ENCODE measurements at regions of chrX and their contacts with region 1.

Region 1: DNA sequence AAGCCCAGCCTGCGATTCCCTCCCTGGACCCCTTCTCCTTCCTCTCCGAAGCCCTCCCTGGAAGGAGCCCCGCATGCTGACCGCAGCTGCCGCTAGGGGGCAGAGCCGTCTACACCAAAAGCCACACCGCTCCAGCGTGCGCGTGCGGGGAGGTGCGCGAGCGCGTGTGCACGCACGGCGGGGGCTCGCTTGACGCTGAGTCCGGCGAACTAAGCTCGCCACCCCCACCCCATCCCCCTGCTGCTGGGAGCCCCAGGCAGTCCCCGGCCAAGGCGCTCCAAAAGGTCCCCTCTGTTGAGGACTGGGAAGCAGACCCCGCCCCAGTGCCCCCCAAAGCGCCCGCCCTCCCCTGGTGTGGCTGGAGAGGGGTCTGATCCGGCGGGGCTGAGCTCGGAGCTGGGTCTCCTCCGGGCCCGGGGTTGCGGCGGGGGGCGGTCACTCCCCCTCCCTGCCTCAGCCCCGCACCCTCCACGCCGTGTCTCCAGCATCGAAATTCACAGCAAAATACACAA is 11.0 kb upstream of the CCNQ start:
- DNase-seq: peak; percentile 52
- ATAC-seq: peak; percentile 84
- H3K4me3 ChIP-seq: peak overlapping the region; percentile 26 to 58 (median 36); a peak in 4 of 6 replicates
- H3K27ac ChIP-seq: peak overlapping the region; percentile 72
- H3K4me1 ChIP-seq: peaks cover 18% of the 10 kb centered on the region
- H3K27me3 ChIP-seq: no peaks in the 10 kb centered on the region
- CTCF ChIP-seq: peak; percentile 94
- EP300 ChIP-seq: no peak
- POLR2A ChIP-seq: no peak
- RAD21 ChIP-seq: peak; percentile 88

Region 2: GRCh38 chrX:153627675-153628111 is 17.7 kb after region 1 on chrX:
- CTCF ChIA-PET with region 1: no interaction called
- POLR2A ChIA-PET with region 1: interaction called, 144 read pairs
- in situ Hi-C with region 1: no loop called
- intact Hi-C with region 1: loop called (anchors 1 kb)
- DNase-seq: peak; percentile 80
- ATAC-seq: peak; percentile 68
- H3K4me3 ChIP-seq: peak overlapping the region in 1 of 3 experiments; percentile 37; a peak in 2 of 6 replicates
- H3K27ac ChIP-seq: peak overlapping the region; percentile 100
- H3K4me1 ChIP-seq: peaks cover 86% of the 10 kb centered on the region
- H3K27me3 ChIP-seq: no peaks in the 10 kb centered on the region
- CTCF ChIP-seq: peak; percentile 39
- EP300 ChIP-seq: peak in 1 of 2 experiments; percentile 66; a peak in 2 of 4 replicates
- POLR2A ChIP-seq: peak in 1 of 2 experiments; percentile 66; a peak in 1 of 4 replicates
- RAD21 ChIP-seq: no peak

Region 3: DNA sequence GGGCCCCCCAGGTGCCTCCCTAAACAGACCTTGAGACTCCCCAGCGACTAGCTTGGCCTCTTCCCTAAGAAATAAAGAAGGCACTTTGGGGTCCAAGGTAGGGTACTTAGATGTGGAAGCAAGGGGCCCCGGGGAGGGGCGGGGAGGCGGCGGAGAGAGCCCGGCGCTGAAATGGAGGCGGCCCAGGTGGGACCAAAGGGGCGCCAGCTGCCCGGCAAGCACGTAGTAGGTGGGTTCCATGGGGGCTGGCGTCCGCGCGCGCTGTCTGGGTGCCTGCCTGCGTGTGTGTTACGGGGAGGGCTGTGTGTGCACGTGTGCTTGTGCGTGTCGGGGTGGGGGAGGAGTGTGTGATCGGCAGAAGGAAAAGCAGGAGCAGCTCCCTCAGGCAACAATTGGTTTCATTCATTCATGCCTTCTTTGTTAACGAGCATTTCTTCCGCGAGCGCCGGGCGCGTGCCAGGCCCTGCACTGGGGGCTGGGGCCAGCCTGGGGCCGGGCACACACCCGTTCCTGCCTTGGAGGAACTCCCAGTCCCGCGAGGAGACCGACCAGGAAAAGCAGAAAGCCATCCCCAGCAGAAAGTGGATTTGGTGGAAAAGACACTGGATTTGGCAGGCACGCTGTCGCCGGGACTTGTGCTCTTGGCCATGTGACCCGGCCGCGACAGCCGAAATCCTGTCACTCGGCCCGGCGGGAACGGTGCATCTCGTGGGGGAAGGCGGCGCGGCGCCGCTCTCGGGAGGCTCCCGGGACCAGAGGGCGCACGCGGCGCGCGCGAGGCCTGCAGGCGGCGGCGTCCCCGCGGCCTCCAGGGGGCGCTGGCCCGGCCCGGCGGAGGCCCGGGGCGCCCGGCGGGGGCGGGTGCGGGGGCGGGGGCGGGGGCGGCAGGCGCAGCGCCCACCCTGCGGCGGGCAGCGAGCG is 33.7 kb after region 1 on chrX:
- CTCF ChIA-PET with region 1: interaction called, 12 read pairs
- POLR2A ChIA-PET with region 1: interaction called, 96 read pairs
- in situ Hi-C with region 1: loop called (anchors 5 kb)
- intact Hi-C with region 1: no loop called
- DNase-seq: no peak
- ATAC-seq: no peak
- H3K4me3 ChIP-seq: peak overlapping the region; percentile 65 to 87 (median 75); a peak in 5 of 6 replicates
- H3K27ac ChIP-seq: peak overlapping the region; percentile 72
- H3K4me1 ChIP-seq: peaks cover 51% of the 10 kb centered on the region
- H3K27me3 ChIP-seq: no peaks in the 10 kb centered on the region; a peak in 1 of 5 replicates
- CTCF ChIP-seq: peak; percentile 28; the same call in 1 of the 2 replicates
- EP300 ChIP-seq: no peak
- POLR2A ChIP-seq: no peak
- RAD21 ChIP-seq: 0 out of 2 replicates have a peak, but pooled peaks have one; percentile 23

Region 4: GRCh38 chrX:153662266-153662665 is 52.3 kb after region 1 on chrX:
- CTCF ChIA-PET with region 1: interaction called, 17 read pairs
- POLR2A ChIA-PET with region 1: no interaction called
- in situ Hi-C with region 1: no loop called
- intact Hi-C with region 1: loop called (anchors 2 kb)
- DNase-seq: peak; percentile 48
- ATAC-seq: peak; percentile 88
- H3K4me3 ChIP-seq: no peak overlapping the region
- H3K27ac ChIP-seq: no peak overlapping the region
- H3K4me1 ChIP-seq: 0 out of 2 replicates have a peak, but pooled peaks cover under 1% of the 10 kb centered on the region
- H3K27me3 ChIP-seq: peaks cover 0 to 14% of the 10 kb centered on the region in 2 experiments; a peak in 2 of 5 replicates
- CTCF ChIP-seq: peak; percentile 75
- EP300 ChIP-seq: no peak
- POLR2A ChIP-seq: no peak
- RAD21 ChIP-seq: peak; percentile 73